Breast epithelium (tissue), 4 donors: ENCODE measurements at regions of chr9 and their contacts with region 1.

Region 1: DNA sequence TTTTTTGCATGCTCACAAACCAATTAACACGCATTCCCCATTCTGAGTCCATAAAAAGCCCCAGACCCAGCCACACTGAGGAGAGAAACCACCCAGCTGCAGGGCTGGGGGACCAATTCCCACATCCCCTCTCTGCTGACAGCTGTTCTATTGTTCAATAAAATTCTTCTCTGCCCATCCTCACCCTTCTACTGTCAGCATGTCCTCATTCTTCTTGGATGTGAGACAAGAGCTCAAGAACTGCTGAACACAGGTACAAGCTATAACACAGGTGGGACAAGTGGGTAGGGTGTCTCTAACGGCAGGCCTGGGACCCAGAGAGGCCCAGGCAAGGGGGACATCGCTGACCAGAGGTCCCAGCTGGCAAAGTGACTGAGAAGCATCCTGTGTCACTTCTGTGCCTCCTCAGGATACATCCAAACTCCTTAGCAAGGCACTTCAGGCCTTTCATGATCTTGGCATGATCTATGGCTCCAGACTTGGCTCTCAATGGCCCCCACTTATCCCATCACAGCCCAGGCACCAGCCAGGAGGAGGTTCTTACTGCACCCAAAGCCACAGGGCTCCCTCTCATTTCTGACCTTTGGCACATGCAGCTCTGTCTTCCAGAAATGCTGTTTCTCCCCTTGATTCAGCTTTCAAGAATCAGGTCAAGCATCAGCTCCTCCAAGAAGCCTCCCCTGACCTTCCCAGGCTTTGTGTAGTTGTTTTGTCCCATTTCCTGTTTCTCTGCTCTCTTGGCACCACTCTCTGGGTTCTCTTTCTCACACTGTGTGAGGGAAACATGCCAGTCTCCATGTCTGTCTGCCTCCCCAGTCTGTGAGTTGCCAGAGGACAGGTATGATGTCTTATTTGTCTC is 7.3 kb upstream of the ALDH1B1 start:
- DNase-seq: no peak
- H3K4me3 ChIP-seq: no peak overlapping the region
- H3K27ac ChIP-seq: no peak overlapping the region
- H3K4me1 ChIP-seq: peaks cover 0 to 4% of the 10 kb centered on the region in 2 donors
- H3K27me3 ChIP-seq: no peaks in the 10 kb centered on the region
- CTCF ChIP-seq: no peak
- POLR2A ChIP-seq: no peak

Region 2: GRCh38 chr9:38358390-38359296 is 26.6 kb before region 1 on chr9:
- intact Hi-C with region 1: loop called (anchors 1 kb)
- DNase-seq: no peak
- H3K4me3 ChIP-seq: no peak overlapping the region
- H3K27ac ChIP-seq: no peak overlapping the region
- H3K4me1 ChIP-seq: no peaks in the 10 kb centered on the region
- H3K27me3 ChIP-seq: no peaks in the 10 kb centered on the region
- CTCF ChIP-seq: no peak
- POLR2A ChIP-seq: no peak

Region 3: DNA sequence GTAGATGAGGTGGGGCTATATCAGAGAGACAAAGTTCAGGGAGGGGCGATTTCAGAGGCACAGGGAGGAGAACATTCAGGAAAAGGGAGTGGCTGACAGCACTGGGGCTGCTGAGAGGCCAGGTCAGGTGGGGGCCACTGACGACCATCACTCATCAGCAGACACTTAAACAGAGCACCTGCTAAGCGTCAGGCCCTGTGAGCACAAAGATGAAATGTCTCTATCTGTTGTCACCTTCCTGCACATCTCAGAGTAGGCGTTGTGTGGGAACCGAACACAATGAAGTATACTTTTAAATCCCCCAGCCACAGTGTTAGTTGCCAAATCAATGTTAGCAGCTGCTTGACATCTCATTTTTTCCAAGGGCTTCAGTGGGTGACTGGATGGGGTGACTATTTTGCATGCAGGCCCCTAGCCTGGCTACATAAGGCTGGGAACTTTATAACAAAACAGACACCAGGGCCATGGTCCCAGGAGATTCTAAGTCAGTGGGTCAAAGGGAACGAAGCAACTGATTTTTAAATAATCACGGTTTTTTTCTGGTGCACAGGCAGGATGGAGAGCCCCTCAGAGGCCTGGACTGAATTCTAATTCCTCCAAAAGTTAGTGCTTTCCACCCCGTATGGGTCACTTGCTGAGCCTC is 266.3 kb after region 1 on chr9:
- intact Hi-C with region 1: no loop called
- DNase-seq: no peak
- H3K4me3 ChIP-seq: no peak overlapping the region
- H3K27ac ChIP-seq: no peak overlapping the region
- H3K4me1 ChIP-seq: no peaks in the 10 kb centered on the region
- H3K27me3 ChIP-seq: no peaks in the 10 kb centered on the region
- CTCF ChIP-seq: no peak
- POLR2A ChIP-seq: no peak